Kidney (tissue), 22 donors: ENCODE measurements at regions of chr9 and their contacts with region 1.

Region 1: GRCh38 chr9:109520478-109521132 is 22.5 kb upstream of the PTPN3 start:
- DNase-seq: peak in 4 of 5 donors; percentile 76 to 87 (median 82)
- H3K4me3 ChIP-seq: no peak overlapping the region
- H3K27ac ChIP-seq: no peak overlapping the region
- H3K4me1 ChIP-seq: peaks cover 0 to 4% (median 0%) of the 10 kb centered on the region in 3 donors
- H3K27me3 ChIP-seq: no peaks in the 10 kb centered on the region
- CTCF ChIP-seq: peak; percentile 91

Region 2: GRCh38 chr9:109440797-109441287 is 79.8 kb before region 1 on chr9:
- intact Hi-C with region 1: loop called (anchors 10 kb)
- DNase-seq: peak in 4 of 5 donors; percentile 50 to 78 (median 64)
- H3K4me3 ChIP-seq: no peak overlapping the region
- H3K27ac ChIP-seq: no peak overlapping the region
- H3K4me1 ChIP-seq: peaks cover 0 to 10% (median 6%) of the 10 kb centered on the region in 3 donors
- H3K27me3 ChIP-seq: no peaks in the 10 kb centered on the region
- CTCF ChIP-seq: peak; percentile 82

Region 3: GRCh38 chr9:109821711-109822110 is 301.1 kb after region 1 on chr9:
- intact Hi-C with region 1: no loop called
- DNase-seq: no peak
- H3K4me3 ChIP-seq: no peak overlapping the region
- H3K27ac ChIP-seq: no peak overlapping the region
- H3K4me1 ChIP-seq: peaks cover 0 to 3% (median 0%) of the 10 kb centered on the region in 3 donors
- H3K27me3 ChIP-seq: no peaks in the 10 kb centered on the region
- CTCF ChIP-seq: no peak